ENCODE measurements at regions of chr22 and their contacts with region 1.

Region 1: GRCh38 chr22:24503137-24503842 is 8.2 kb downstream of the UPB1 start:
- DNase-seq: peak; percentile 76
- H3K4me3 ChIP-seq: no peak overlapping the region
- H3K27ac ChIP-seq: no peak overlapping the region
- H3K4me1 ChIP-seq: peaks cover 16% of the 10 kb centered on the region
- H3K27me3 ChIP-seq: no peaks in the 10 kb centered on the region
- CTCF ChIP-seq: peak; percentile 75 to 77
- POLR2A ChIP-seq: no peak

Region 2: GRCh38 chr22:24270638-24271408 is 232.5 kb before region 1 on chr22 and contains the start of gene SPECC1L:
- CTCF ChIA-PET with region 1: interaction called, 3 read pairs
- POLR2A ChIA-PET with region 1: no interaction called
- dilution Hi-C with region 1: no loop called
- intact Hi-C with region 1: loop called (anchors 5 kb)
- DNase-seq: peak; percentile 96
- H3K4me3 ChIP-seq: peak within 1 kb of the TSS; percentile 68 to 98 (median 85)
- H3K27ac ChIP-seq: peak within 1 kb of the TSS; percentile 70
- H3K4me1 ChIP-seq: peaks cover 12% of the 10 kb centered on the region
- H3K27me3 ChIP-seq: no peaks in the 10 kb centered on the region
- CTCF ChIP-seq: peak in 1 of 2 donors; percentile 6
- POLR2A ChIP-seq: peak; percentile 99
- total RNA-seq, gene SPECC1L: 63.2 and 79.3 TPM in 2 replicates

Region 3: DNA sequence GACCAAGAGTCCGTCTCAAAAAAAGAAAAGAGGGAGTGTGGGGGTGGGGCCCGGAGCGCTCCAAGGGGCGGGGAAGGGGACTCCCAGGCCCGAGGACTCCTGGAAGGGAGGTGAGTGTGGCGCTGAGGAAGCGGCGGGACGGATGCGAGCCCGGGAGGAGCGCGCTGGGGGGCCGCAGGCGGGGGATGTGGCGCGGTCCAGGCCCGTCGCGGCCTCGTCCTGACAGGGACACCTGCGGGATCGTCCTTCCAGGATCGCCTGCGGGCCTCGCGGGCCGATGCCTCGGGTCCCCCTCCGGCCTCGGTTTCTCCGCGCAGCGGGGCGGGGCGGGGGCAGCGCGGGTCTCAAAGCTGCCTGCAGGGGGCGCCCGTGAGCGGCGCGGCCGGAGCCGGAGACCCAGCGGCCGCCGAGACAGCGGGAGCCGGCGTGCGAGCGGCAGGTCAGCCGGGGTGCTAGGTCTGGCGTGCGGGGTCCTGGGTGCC is 79.7 kb before region 1 on chr22:
- CTCF ChIA-PET with region 1: interaction called, 64 read pairs
- POLR2A ChIA-PET with region 1: no interaction called
- dilution Hi-C with region 1: no loop called
- intact Hi-C with region 1: loop called (anchors 1 kb)
- DNase-seq: peak; percentile 44
- H3K4me3 ChIP-seq: peak overlapping the region in 2 of 3 experiments; percentile 34 to 82
- H3K27ac ChIP-seq: no peak overlapping the region
- H3K4me1 ChIP-seq: peaks cover 27% of the 10 kb centered on the region
- H3K27me3 ChIP-seq: no peaks in the 10 kb centered on the region
- CTCF ChIP-seq: peak; percentile 73 to 85
- POLR2A ChIP-seq: no peak

Region 4: GRCh38 chr22:24440718-24441405 is 62.4 kb before region 1 on chr22:
- CTCF ChIA-PET with region 1: interaction called, 19 read pairs
- POLR2A ChIA-PET with region 1: no interaction called
- dilution Hi-C with region 1: no loop called
- intact Hi-C with region 1: no loop called
- DNase-seq: no peak
- H3K4me3 ChIP-seq: no peak overlapping the region
- H3K27ac ChIP-seq: no peak overlapping the region
- H3K4me1 ChIP-seq: peaks cover 14% of the 10 kb centered on the region
- H3K27me3 ChIP-seq: no peaks in the 10 kb centered on the region
- CTCF ChIP-seq: no peak
- POLR2A ChIP-seq: no peak

Region 5: GRCh38 chr22:24486501-24486921 is 16.8 kb before region 1 on chr22:
- CTCF ChIA-PET with region 1: interaction called, 20 read pairs
- POLR2A ChIA-PET with region 1: no interaction called
- dilution Hi-C with region 1: no loop called
- intact Hi-C with region 1: no loop called
- DNase-seq: peak; percentile 77
- H3K4me3 ChIP-seq: no peak overlapping the region
- H3K27ac ChIP-seq: no peak overlapping the region
- H3K4me1 ChIP-seq: peaks cover 36% of the 10 kb centered on the region
- H3K27me3 ChIP-seq: no peaks in the 10 kb centered on the region
- CTCF ChIP-seq: no peak
- POLR2A ChIP-seq: no peak

Measured in endothelial cell of umbilical vein (primary cell).